Panc1 (cell line): ENCODE measurements at regions of chr1 and their contacts with region 1.

Region 1: DNA sequence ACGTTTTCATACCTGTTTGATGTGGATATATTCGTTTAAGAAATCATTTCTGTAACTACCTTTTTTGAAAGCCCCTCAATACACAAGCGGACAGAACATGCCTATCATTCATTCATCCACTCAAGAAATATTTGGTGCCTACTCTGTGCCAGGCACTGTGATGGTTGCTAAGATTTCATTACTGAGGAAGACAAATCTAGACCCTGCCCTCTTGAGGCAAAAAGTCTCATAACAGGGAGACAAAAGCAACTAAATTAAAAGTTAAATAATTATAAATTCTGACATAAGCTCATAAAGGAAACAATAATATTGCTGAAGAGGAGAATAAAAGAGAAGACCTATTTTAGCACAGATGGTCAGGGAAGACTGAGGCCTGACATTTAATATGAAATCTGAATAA is 203.5 kb upstream of the ZNHIT6 start:
- DNase-seq: peak; percentile 22
- ATAC-seq: peak; percentile 83
- H3K4me3 ChIP-seq: no peak overlapping the region
- H3K27ac ChIP-seq: no peak overlapping the region
- H3K4me1 ChIP-seq: no peaks in the 10 kb centered on the region
- H3K27me3 ChIP-seq: 0 out of 2 replicates have a peak, but pooled peaks cover under 1% of the 10 kb centered on the region
- CTCF ChIP-seq: peak; percentile 77

Region 2: GRCh38 chr1:84834419-84835064 is 1077.2 kb before region 1 on chr1:
- CTCF ChIA-PET with region 1: no interaction called
- POLR2A ChIA-PET with region 1: no interaction called
- in situ Hi-C with region 1: no loop called
- intact Hi-C with region 1: no loop called
- DNase-seq: peak; percentile 88
- ATAC-seq: peak; percentile 90
- H3K4me3 ChIP-seq: no peak overlapping the region
- H3K27ac ChIP-seq: peak overlapping the region; percentile 48; the same call in 1 of the 2 replicates
- H3K4me1 ChIP-seq: peaks cover 32% of the 10 kb centered on the region
- H3K27me3 ChIP-seq: no peaks in the 10 kb centered on the region
- CTCF ChIP-seq: no peak

Region 3: GRCh38 chr1:85806236-85806965 is 105.3 kb before region 1 on chr1:
- CTCF ChIA-PET with region 1: no interaction called
- POLR2A ChIA-PET with region 1: interaction called, 10 read pairs
- in situ Hi-C with region 1: no loop called
- intact Hi-C with region 1: no loop called
- DNase-seq: no peak
- ATAC-seq: no peak
- H3K4me3 ChIP-seq: no peak overlapping the region
- H3K27ac ChIP-seq: no peak overlapping the region
- H3K4me1 ChIP-seq: no peaks in the 10 kb centered on the region
- H3K27me3 ChIP-seq: no peaks in the 10 kb centered on the region
- CTCF ChIP-seq: no peak

Region 4: GRCh38 chr1:85952460-85952859 is 40.7 kb after region 1 on chr1:
- CTCF ChIA-PET with region 1: no interaction called
- POLR2A ChIA-PET with region 1: no interaction called
- in situ Hi-C with region 1: no loop called
- intact Hi-C with region 1: no loop called
- DNase-seq: no peak
- ATAC-seq: no peak
- H3K4me3 ChIP-seq: no peak overlapping the region
- H3K27ac ChIP-seq: no peak overlapping the region
- H3K4me1 ChIP-seq: no peaks in the 10 kb centered on the region
- H3K27me3 ChIP-seq: peaks cover 12% of the 10 kb centered on the region
- CTCF ChIP-seq: no peak